OCI-LY7 (cell line): ENCODE measurements at regions of chr14 and their contacts with region 1.

Region 1: DNA sequence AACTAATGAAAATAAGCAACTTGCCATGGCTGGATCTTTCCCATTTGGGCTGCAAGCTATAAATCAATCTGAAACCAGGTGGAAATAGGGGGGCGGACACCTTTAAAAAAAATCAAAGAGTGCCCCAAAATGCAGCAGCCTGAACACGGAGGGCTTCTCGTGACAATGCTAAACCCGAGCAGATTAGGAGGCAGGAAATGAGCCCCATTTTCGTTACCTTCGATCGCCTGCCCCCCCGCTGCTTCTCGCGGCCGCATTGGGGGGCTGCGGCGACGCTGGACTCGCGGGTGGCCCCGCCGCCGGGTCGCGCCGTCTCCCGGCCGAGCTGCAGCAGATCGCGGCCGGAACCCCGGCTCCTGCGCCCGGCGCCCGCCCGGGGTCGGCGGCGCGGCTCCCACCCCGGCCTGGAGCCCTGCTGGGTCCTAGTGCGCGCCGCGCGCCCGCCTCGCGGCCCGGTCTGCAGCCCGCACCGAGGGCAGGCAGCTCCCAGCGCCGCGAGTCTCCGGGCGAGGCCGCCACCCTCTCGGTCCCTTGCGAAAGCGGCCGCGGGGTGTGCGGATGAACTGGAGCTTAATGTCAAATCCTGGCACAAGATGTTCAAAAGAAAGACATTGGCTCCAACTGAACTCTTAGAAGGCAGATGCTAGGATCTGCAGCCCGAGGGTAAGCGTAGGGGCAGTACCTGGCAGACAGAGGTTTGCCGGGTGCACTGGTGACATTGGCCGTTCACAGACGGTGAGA is 201.9 kb upstream of the FOXN3 start:
- DNase-seq: peak; percentile 86
- H3K4me3 ChIP-seq: peak overlapping the region; percentile 81
- H3K27ac ChIP-seq: peak overlapping the region; percentile 74
- H3K4me1 ChIP-seq: peaks cover 58% of the 10 kb centered on the region
- CTCF ChIP-seq: peak; percentile 13; the same call in 1 of the 2 replicates

Region 2: DNA sequence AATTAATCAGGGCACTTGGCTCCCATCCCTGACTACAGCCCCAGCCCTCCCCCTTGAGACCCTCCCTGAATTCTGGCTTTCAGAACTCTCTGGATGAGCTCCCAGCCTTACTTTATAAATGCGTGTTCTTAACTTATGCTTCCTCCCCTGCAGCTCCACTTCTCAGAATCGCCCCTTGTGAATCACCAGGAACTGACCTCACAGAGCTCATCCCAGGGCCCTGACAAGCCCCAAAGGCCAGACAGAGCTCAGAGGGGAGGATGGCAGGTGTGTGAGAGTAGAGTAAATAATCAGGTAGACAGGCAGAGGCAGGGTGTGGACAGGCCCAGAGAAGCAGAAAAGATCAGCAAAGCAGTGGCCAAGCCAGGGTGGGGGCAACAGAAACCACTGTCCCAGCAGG is 133.7 kb before region 1 on chr14:
- CTCF ChIA-PET with region 1: no interaction called
- POLR2A ChIA-PET with region 1: no interaction called
- intact Hi-C with region 1: no loop called
- DNase-seq: no peak
- H3K4me3 ChIP-seq: no peak overlapping the region
- H3K27ac ChIP-seq: no peak overlapping the region
- H3K4me1 ChIP-seq: no peaks in the 10 kb centered on the region
- CTCF ChIP-seq: no peak

Region 3: GRCh38 chr14:89578156-89578555 is 40.8 kb before region 1 on chr14:
- CTCF ChIA-PET with region 1: no interaction called
- POLR2A ChIA-PET with region 1: no interaction called
- intact Hi-C with region 1: no loop called
- DNase-seq: no peak
- H3K4me3 ChIP-seq: no peak overlapping the region
- H3K27ac ChIP-seq: no peak overlapping the region
- H3K4me1 ChIP-seq: no peaks in the 10 kb centered on the region
- CTCF ChIP-seq: no peak

Region 4: GRCh38 chr14:89773644-89774316 is 154.8 kb after region 1 on chr14:
- CTCF ChIA-PET with region 1: no interaction called
- POLR2A ChIA-PET with region 1: no interaction called
- intact Hi-C with region 1: loop called (anchors 2 kb)
- DNase-seq: peak; percentile 85
- H3K4me3 ChIP-seq: peak overlapping the region; percentile 53
- H3K27ac ChIP-seq: peak overlapping the region; percentile 79
- H3K4me1 ChIP-seq: peaks cover 49% of the 10 kb centered on the region
- CTCF ChIP-seq: no peak

Region 5: DNA sequence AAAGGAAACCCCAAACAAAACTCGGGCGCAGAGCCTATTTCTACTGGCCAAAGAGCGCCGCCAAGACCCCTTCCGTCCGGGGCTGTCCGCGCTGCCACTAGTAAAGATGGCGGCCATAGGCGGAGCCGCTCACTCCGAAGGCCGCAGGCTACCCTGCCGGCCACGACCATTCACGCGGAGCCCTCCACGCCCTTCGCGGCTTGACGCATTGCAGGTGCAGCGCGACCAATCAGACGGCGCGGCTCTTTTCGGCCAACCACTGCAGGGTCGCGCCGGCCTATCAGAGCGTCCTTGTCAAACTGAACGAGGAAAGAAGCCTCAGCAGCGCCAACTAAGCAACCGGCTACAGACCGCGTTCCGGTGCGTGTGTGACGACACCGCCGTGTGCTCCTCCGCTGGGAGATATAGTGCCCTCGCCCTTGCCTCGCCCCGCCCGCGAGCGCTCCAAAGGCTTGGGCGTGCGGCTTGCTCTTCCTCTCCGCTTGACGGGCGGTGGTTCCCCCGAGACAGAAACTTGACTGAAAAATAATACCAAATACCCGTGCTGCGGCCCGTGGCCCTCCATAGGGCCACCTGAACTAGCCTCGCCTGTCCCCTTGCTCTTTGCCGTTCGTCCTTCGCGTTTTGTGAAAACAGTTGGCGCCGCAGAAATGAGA is 764.2 kb after region 1 on chr14:
- CTCF ChIA-PET with region 1: no interaction called
- POLR2A ChIA-PET with region 1: no interaction called
- intact Hi-C with region 1: loop called (anchors 5 kb)
- DNase-seq: peak; percentile 99
- H3K4me3 ChIP-seq: peak overlapping the region; percentile 76
- H3K27ac ChIP-seq: peak overlapping the region; percentile 79
- H3K4me1 ChIP-seq: peaks cover 29% of the 10 kb centered on the region
- CTCF ChIP-seq: 0 out of 2 replicates have a peak, but pooled peaks have one; percentile 38